Heart left ventricle (tissue), 16 donors: ENCODE measurements at regions of chr7 and their contacts with region 1.

Region 1: GRCh38 chr7:5634107-5634950 is 147.1 kb downstream of the RNF216 start:
- DNase-seq: peak; percentile 75 to 86 (median 77)
- ATAC-seq: peak; percentile 75 to 89 (median 84)
- H3K4me3 ChIP-seq: peak overlapping the region in 5 of 12 donors; percentile 2 to 30 (median 9)
- H3K27ac ChIP-seq: peak overlapping the region in 11 of 12 donors; percentile 36 to 79 (median 58)
- H3K4me1 ChIP-seq: peaks cover 5 to 81% (median 57%) of the 10 kb centered on the region in 12 donors
- H3K27me3 ChIP-seq: no peaks in the 10 kb centered on the region
- CTCF ChIP-seq: no peak
- POLR2A ChIP-seq: no peak

Region 2: GRCh38 chr7:5296611-5297226 is 337.6 kb before region 1 on chr7:
- intact Hi-C with region 1: no loop called
- DNase-seq: no peak
- ATAC-seq: no peak
- H3K4me3 ChIP-seq: peak overlapping the region in 1 of 12 donors; percentile 30
- H3K27ac ChIP-seq: no peak overlapping the region
- H3K4me1 ChIP-seq: peaks cover 0 to 6% (median 0%) of the 10 kb centered on the region in 12 donors
- H3K27me3 ChIP-seq: peaks cover 0 to 26% (median 4%) of the 10 kb centered on the region in 9 donors
- CTCF ChIP-seq: no peak
- POLR2A ChIP-seq: no peak

Region 3: DNA sequence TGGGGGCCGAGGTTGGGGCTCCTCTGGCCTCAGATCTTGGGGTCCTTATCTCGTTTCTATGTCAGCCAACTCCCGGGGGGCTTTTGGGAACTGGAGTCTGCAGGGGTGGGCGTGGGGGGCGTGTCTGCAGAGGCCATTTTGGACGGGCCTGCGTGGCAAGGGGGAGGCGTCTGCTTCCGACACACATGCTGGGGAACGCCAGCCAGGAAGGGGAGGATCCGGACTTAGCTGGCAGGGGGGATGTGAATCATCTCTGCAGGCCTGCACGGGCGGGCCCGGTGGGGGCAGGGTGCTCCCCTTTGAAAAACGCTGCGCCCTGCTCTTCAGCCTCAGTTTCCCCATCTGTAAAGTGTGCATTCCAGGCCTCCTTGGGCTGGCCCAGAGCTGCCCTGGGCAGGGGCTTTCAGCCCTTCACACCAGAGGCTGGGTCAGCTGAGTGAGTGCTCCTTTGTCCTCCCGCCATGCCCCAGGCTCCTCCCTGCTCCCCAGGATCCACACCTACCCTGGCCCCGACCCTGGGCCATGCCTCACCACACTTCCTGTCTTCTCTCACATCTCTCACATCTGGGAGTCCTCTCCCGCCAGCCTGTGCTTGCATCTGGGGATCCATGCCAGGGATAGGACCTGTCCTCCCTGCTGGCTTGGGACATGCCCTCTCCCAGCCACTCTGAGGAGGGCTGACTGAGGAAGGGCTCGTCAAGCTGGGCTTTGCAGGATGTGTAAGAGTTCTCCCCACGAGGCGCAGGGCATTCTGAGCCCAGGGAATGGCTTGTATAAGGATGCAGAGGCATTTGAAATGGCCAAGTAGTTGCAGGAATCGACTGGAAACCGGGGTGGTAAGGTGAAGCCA is 38.1 kb before region 1 on chr7:
- intact Hi-C with region 1: loop called in 1 of 10 experiments (anchors 5 kb)
- DNase-seq: peak; percentile 79 to 90 (median 86)
- ATAC-seq: peak; percentile 44 to 74 (median 70)
- H3K4me3 ChIP-seq: peak overlapping the region in 10 of 12 donors; percentile 10 to 82 (median 72)
- H3K27ac ChIP-seq: peak overlapping the region in 8 of 12 donors; percentile 41 to 80 (median 72)
- H3K4me1 ChIP-seq: peaks cover 6 to 74% (median 47%) of the 10 kb centered on the region in 12 donors
- H3K27me3 ChIP-seq: peaks cover 0 to 28% (median 0%) of the 10 kb centered on the region in 9 donors
- CTCF ChIP-seq: no peak
- POLR2A ChIP-seq: no peak